Transverse colon (tissue), 4 donors: ENCODE measurements at regions of chr5 and their contacts with region 1.

Region 1: GRCh38 chr5:79133657-79134451 is 22.2 kb downstream of the BHMT start:
- DNase-seq: peak; percentile 69
- H3K4me3 ChIP-seq: peak overlapping the region in 3 of 4 donors; percentile 6 to 30 (median 7)
- H3K27ac ChIP-seq: peak overlapping the region; percentile 68 to 81 (median 78)
- H3K4me1 ChIP-seq: peaks cover 0 to 14% (median 8%) of the 10 kb centered on the region in 4 donors
- H3K27me3 ChIP-seq: no peaks in the 10 kb centered on the region
- CTCF ChIP-seq: peak; percentile 61 to 73 (median 65)
- EP300 ChIP-seq: no peak
- POLR2A ChIP-seq: no peak

Region 2: DNA sequence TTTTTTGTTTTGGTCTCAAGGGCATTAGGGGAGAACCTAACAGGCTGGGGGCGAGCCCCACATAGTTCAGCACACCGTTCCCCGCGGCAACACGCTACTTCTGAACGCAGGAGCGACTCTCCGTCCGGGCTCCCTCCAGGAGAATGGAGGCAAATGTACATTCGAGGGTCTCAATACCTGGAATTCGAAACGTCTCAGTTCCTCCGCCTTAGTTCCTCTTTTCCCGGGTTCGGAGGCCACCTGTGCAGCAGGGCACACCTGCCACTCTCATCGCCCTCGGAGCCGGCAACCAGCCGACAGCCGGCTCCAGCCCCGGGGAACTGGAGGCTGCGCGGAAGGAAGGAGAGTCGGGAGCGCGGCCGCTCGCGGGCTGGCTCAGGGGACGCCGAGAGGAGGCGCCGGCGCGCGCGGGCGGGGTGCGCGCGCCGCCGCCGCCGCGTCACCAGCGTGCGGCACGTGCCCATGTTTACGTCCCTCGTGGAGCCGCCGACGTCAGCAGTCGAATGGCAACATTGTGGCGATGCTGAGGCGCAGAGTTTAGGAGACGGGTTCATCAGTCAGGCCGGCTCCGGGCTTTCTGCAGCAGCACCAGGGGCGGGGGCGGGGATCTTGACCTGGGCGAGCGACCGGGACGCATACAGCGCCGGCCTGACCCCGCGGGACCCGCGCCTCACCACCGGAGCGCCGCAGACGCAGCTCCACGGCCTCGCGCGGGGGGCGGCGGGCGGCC is 101.9 kb after region 1 on chr5 and contains the start of gene JMY:
- in situ Hi-C with region 1: no loop called
- intact Hi-C with region 1: loop called (anchors 5 kb)
- DNase-seq: peak; percentile 90
- H3K4me3 ChIP-seq: peak within 1 kb of the TSS; percentile 69 to 93 (median 74)
- H3K27ac ChIP-seq: peak within 1 kb of the TSS; percentile 92 to 96 (median 94)
- H3K4me1 ChIP-seq: peaks cover 4 to 38% (median 14%) of the 10 kb centered on the region in 4 donors
- H3K27me3 ChIP-seq: no peaks in the 10 kb centered on the region
- CTCF ChIP-seq: no peak
- EP300 ChIP-seq: no peak
- POLR2A ChIP-seq: peak; percentile 80
- total RNA-seq, gene JMY: 7.8 to 25.1 (median 14.7) TPM

Region 3: GRCh38 chr5:79464695-79465332 is 331.0 kb after region 1 on chr5:
- in situ Hi-C with region 1: loop called (anchors 5 to 25 kb)
- intact Hi-C with region 1: loop called (anchors 5 kb)
- DNase-seq: no peak
- H3K4me3 ChIP-seq: no peak overlapping the region
- H3K27ac ChIP-seq: no peak overlapping the region
- H3K4me1 ChIP-seq: no peaks in the 10 kb centered on the region
- H3K27me3 ChIP-seq: no peaks in the 10 kb centered on the region
- CTCF ChIP-seq: peak; percentile 56 to 63 (median 59)
- EP300 ChIP-seq: no peak
- POLR2A ChIP-seq: no peak